Vagina (tissue), 2 donors: ENCODE measurements at regions of chr1 and their contacts with region 1.

Region 1: DNA sequence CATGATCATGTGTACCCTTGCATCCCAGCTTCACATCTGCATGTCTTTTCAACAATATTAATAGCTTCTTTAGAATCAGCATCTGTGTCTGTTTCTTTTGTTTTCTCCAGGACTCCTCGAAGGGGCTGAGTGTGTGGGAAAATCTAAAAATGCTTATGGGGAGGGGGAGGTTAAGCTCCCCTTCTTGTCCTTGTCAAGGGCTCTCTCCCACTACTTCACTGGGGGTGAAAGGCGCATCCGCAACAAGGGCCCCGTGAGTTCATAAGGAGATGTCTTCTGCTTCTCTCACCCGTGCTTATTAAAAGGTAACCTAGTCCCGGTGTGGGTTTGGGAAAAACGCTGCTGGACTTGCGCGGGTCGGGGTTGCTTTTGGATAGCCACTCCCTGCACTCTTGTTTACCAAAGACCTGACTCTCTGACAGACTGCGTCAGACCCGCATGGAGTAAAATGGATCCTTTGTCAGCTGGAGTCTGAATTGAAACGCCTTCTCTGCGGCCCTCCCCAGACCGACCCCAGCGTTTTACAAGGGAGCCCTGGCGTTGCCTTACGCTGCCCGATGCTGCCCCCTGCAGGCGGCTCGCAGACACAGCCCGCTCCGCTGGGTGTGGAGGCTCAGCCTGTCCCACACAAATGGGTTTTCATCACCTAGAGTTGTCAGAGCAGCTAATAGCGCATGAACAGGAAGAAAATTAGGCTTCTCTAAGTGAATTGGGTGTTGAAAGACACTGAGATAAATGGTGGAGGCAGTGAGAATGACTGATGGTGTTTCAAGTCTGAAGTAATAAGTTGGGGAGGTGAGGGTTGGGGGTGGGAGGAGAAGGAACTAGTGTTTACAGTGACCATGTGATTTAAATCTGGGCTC is 53.8 kb downstream of the IER5 start:
- DNase-seq: no peak
- H3K4me3 ChIP-seq: peak overlapping the region; percentile 23 to 27
- H3K27ac ChIP-seq: peak overlapping the region; percentile 78
- H3K4me1 ChIP-seq: peaks cover 34% of the 10 kb centered on the region
- H3K27me3 ChIP-seq: no peaks in the 10 kb centered on the region
- CTCF ChIP-seq: peak; percentile 94 to 98 (median 94)
- POLR2A ChIP-seq: no peak

Region 2: GRCh38 chr1:180881806-180882509 is 260.4 kb before region 1 on chr1:
- intact Hi-C with region 1: loop called (anchors 10 kb)
- DNase-seq: no peak
- H3K4me3 ChIP-seq: no peak overlapping the region
- H3K27ac ChIP-seq: no peak overlapping the region
- H3K4me1 ChIP-seq: no peaks in the 10 kb centered on the region
- H3K27me3 ChIP-seq: no peaks in the 10 kb centered on the region
- CTCF ChIP-seq: peak in 2 of 3 experiments; percentile 7 to 39
- POLR2A ChIP-seq: no peak

Region 3: GRCh38 chr1:181033799-181034451 is 108.4 kb before region 1 on chr1 and contains the start of gene MR1:
- intact Hi-C with region 1: loop called (anchors 5 kb)
- DNase-seq: no peak
- H3K4me3 ChIP-seq: peak within 1 kb of the TSS; percentile 32 to 41
- H3K27ac ChIP-seq: peak within 1 kb of the TSS; percentile 95
- H3K4me1 ChIP-seq: peaks cover 46% of the 10 kb centered on the region
- H3K27me3 ChIP-seq: no peaks in the 10 kb centered on the region
- CTCF ChIP-seq: no peak
- POLR2A ChIP-seq: peak; percentile 65 to 66
- total RNA-seq, gene MR1: 12.8 TPM